GM12878 (cell line): ENCODE measurements at regions of chr15 and their contacts with region 1.

Region 1: DNA sequence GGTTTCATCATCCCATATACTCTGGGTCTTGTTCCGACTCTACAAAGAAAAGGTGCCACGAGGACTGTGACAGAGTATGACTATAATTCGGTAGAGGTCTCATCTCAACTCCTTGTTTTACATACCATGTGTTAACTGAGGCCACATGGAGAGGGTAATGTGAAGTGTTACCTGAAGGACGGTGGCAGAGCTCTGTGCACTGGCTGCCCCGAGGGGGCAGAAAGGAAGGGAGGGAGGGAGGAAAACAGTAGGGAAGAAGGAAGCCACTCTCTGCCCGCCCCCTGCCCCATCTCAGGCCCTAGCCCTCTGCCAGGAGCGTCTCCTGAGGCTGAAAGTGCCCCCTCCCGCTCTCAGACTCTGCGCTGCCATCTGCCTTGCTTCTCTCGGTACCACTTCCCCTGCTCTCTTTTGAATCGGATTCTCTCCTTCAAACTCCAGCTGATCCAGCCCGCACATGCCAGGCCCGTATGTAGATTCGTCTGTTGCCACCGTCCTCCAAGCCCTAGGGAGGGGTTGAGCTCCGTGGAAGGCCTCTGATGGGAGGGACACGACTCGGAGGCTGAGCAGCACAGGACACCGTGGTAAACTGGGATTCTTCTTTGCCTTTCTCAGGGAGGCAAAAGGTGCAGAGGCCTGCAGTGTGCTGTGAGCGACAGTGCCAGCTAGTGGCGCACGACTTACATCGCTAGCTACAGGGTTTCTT is 70.5 kb upstream of the ATP10A start:
- DNase-seq: peak; percentile 5
- ATAC-seq: peak; percentile 96
- H3K4me3 ChIP-seq: no peak overlapping the region
- H3K27ac ChIP-seq: no peak overlapping the region
- H3K4me1 ChIP-seq: no peaks in the 10 kb centered on the region
- H3K27me3 ChIP-seq: no peaks in the 10 kb centered on the region
- CTCF ChIP-seq: peak; percentile 54 to 66 (median 65)
- EP300 ChIP-seq: no peak
- POLR2A ChIP-seq: no peak
- RAD21 ChIP-seq: peak; percentile 47

Region 2: DNA sequence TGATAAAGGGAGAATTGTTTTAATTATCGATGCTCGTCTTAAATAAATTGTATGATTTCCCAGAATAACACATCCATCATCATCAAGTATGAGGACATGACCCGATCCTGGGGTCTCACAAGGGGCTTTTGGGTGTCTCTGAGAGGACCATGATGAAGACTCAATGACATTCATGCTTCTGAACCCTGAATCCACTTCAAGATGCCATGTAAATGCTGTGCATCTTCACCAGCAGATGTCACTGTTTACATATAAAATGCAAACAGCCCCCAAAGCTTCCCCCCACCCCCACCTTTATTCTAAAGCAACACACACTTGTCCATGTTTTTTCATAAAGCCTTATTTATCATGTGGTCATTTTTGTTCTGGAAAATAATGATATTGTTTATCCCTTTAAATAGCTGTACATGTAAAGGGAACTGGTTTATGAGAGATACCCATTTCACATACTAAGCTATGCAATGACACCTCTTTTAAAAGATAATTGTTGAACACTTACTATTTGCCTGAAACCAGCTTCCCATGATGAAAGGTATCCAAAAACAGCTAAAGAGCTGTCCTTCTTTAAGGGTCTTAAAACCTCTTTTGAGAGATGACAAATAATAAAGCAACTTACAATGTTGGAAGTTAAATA is 425.1 kb before region 1 on chr15:
- CTCF ChIA-PET with region 1: interaction called, 3 read pairs
- POLR2A ChIA-PET with region 1: no interaction called
- RAD21 ChIA-PET with region 1: interaction called, 3 read pairs
- SMC1A ChIA-PET with region 1: no interaction called
- in situ Hi-C with region 1: loop called (anchors 25 kb)
- intact Hi-C with region 1: no loop called
- DNase-seq: no peak
- ATAC-seq: peak; percentile 39; the same call in 1 of the 3 replicates
- H3K4me3 ChIP-seq: no peak overlapping the region
- H3K27ac ChIP-seq: no peak overlapping the region
- H3K4me1 ChIP-seq: no peaks in the 10 kb centered on the region
- H3K27me3 ChIP-seq: no peaks in the 10 kb centered on the region
- CTCF ChIP-seq: peak; percentile 36 to 58 (median 39); a peak in 4 of 6 replicates
- EP300 ChIP-seq: no peak
- POLR2A ChIP-seq: no peak
- RAD21 ChIP-seq: peak; percentile 59

Region 3: DNA sequence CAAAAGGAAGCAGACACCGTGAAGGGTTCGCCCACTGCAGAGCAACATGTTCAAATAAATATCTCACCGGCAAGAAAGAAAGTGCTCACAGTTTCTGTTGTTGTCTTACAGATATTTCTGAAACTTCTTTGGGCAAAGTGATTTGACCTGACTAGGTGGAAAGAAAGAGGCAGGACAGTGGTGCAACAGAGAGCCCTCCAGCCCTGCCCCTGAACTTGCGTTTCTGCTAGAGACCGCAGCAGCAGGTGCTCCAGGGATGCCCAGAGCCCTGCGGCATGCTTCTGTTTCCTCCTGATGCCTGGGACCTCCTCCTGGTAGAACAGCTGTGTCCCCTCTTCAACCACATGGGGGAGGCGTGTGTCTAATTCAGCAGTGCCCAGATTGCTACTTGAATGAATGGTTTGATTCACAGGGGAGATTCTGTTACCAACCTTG is 193.9 kb before region 1 on chr15:
- CTCF ChIA-PET with region 1: no interaction called
- POLR2A ChIA-PET with region 1: no interaction called
- RAD21 ChIA-PET with region 1: interaction called, 5 read pairs
- SMC1A ChIA-PET with region 1: no interaction called
- in situ Hi-C with region 1: no loop called
- intact Hi-C with region 1: loop called (anchors 2 kb)
- DNase-seq: peak; percentile 12
- ATAC-seq: peak; percentile 88
- H3K4me3 ChIP-seq: no peak overlapping the region
- H3K27ac ChIP-seq: no peak overlapping the region
- H3K4me1 ChIP-seq: no peaks in the 10 kb centered on the region
- H3K27me3 ChIP-seq: no peaks in the 10 kb centered on the region
- CTCF ChIP-seq: peak; percentile 11 to 59 (median 21); a peak in 4 of 6 replicates
- EP300 ChIP-seq: no peak
- POLR2A ChIP-seq: no peak
- RAD21 ChIP-seq: peak; percentile 35; the same call in 1 of the 2 replicates

Region 4: DNA sequence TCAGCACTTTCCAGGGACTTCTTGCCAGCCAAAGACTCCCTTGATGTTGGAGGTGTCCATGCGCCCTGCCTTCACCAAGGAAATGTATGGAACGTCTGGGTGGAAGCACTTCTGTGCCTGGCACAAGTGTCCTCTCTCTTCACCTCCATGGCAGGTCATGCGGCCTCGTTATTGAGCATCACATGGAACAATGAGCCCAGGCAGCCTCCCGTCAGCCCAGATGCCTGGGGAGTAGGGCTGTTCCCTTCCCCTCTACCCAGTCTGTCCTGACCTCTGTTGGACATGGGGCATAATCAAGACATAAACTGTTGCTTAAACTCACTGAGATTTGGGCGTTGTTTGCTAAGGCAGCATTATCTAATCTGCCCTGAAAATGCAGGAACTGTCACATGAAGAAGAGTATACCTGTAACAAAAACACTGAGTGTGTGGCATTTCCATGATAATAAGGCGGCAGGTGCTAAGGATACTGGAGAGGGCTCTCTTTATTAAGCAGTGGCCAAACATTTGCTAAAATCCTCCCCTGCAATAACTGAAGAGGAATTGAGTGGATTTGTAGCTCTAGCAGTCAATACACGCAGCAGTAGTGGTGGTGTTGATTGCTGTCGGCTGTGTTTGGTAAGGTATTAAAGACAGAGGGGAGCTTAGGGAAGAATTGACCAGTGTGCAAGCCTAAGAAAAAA is 267.7 kb after region 1 on chr15:
- CTCF ChIA-PET with region 1: no interaction called
- POLR2A ChIA-PET with region 1: no interaction called
- RAD21 ChIA-PET with region 1: no interaction called
- SMC1A ChIA-PET with region 1: no interaction called
- in situ Hi-C with region 1: loop called (anchors 25 kb)
- intact Hi-C with region 1: no loop called
- DNase-seq: no peak
- ATAC-seq: no peak
- H3K4me3 ChIP-seq: no peak overlapping the region
- H3K27ac ChIP-seq: no peak overlapping the region
- H3K4me1 ChIP-seq: no peaks in the 10 kb centered on the region
- H3K27me3 ChIP-seq: no peaks in the 10 kb centered on the region
- CTCF ChIP-seq: no peak
- EP300 ChIP-seq: no peak
- POLR2A ChIP-seq: no peak
- RAD21 ChIP-seq: no peak